Heart left ventricle (tissue), 16 donors: ENCODE measurements at regions of chr6 and their contacts with region 1.

Region 1: DNA sequence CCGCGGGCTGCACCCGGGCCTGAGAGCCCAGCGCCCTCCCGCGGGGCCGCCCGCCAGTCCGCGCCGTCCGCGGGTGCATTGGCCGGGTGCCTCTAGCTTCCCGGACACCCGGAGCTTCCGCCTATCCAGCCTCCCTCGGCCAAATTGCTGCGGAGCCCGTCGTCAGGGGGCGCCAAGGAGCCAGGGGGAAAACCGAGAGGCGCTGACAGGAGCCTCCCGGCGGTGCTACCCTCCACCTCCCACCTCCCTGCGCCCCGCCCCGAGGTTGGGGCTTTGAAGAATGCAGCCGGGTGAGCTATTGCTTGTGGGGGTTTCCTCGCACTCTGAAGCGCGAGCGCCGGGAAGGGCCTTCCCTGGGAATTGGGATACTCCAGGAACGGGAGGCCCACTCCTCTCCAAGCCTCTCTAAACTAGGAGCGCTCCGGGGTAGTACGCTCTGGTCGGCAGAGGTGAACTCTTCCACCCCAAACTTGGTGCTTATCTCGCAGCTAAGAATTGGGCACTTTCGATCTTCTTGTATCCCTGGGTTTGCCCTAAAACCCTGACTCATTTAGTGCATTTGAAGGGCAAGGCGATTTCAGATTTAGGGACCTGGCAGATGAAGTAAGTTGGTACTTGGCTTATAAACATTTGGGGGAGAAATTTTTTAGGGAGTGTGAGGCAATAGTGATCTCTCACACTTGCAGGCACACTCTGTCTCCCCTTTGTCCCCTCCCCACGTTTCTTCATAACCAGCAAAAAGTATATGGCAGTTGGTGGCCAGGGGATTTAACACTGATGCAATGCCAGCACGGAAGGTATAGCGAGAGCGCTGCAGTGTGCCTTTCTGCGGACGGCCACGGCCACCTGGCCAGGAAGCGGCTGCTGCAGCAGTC is 501 bp downstream of the BEND6 start:
- DNase-seq: peak; percentile 73 to 87 (median 79)
- ATAC-seq: peak; percentile 72 to 86 (median 82)
- H3K4me3 ChIP-seq: peak overlapping the region; percentile 30 to 85 (median 58)
- H3K27ac ChIP-seq: peak overlapping the region in 2 of 12 donors; percentile 31 to 57
- H3K4me1 ChIP-seq: peaks cover 0 to 22% (median 7%) of the 10 kb centered on the region in 12 donors
- H3K27me3 ChIP-seq: peaks cover 0 to 36% (median 0%) of the 10 kb centered on the region in 9 donors
- CTCF ChIP-seq: peak; percentile 46 to 80 (median 65)
- POLR2A ChIP-seq: no peak

Region 2: DNA sequence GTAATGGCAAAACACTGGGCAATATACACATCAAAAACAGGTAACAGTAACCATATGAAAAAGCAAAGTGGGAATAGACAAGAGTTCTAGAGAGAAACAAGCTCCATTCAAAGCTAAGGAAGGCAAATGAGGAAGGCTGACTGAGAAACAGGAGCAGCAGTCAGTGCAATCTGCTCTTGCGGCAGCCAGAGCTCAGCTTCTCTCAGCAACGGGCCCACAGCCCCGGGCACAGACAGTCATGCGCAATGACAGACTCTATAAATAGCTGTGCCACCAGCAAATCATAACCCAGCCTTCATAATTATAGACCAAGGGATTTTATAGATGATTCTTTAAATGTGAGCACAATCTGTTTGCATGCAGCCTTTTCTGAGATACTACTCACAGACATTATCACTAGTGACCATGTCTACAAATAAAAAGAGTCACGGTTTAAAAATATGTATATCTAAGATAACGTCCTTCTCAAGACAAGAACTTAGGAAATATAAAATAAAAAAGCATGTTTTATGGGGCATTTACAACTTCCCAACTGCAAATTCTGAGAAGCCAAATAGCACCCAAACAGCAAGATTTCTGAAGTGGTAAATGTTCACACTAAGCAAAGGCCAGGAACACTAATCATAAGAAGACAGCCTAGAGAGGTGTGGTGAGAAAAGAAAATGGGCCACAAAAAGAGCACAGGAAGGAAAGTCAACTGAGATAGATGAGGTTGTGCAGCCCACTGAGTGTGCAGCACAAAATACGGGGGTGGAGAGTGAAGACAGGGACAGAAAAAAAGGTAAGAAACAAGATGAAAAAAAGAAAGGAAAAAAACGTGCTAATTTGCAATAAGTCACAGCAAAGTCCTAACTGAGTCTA is 40.4 kb before region 1 on chr6:
- intact Hi-C with region 1: loop called in 2 of 10 experiments (anchors 5 kb)
- DNase-seq: peak in 4 of 5 donors; percentile 39 to 55 (median 46)
- ATAC-seq: peak; percentile 84 to 97 (median 93)
- H3K4me3 ChIP-seq: no peak overlapping the region
- H3K27ac ChIP-seq: peak overlapping the region in 3 of 12 donors; percentile 18 to 58 (median 27)
- H3K4me1 ChIP-seq: peaks cover 0 to 13% (median 0%) of the 10 kb centered on the region in 12 donors
- H3K27me3 ChIP-seq: peaks cover 0 to 5% (median 0%) of the 10 kb centered on the region in 9 donors
- CTCF ChIP-seq: no peak
- POLR2A ChIP-seq: no peak

Region 3: GRCh38 chr6:56995347-56995902 is 40.0 kb after region 1 on chr6:
- intact Hi-C with region 1: no loop called
- DNase-seq: no peak
- ATAC-seq: no peak
- H3K4me3 ChIP-seq: no peak overlapping the region
- H3K27ac ChIP-seq: no peak overlapping the region
- H3K4me1 ChIP-seq: no peaks in the 10 kb centered on the region
- H3K27me3 ChIP-seq: no peaks in the 10 kb centered on the region
- CTCF ChIP-seq: no peak
- POLR2A ChIP-seq: no peak

Region 4: GRCh38 chr6:57021086-57021720 is 65.8 kb after region 1 on chr6:
- intact Hi-C with region 1: loop called in 1 of 10 experiments (anchors 5 kb)
- DNase-seq: no peak
- ATAC-seq: peak in 1 of 4 donors; percentile 31
- H3K4me3 ChIP-seq: no peak overlapping the region
- H3K27ac ChIP-seq: no peak overlapping the region
- H3K4me1 ChIP-seq: no peaks in the 10 kb centered on the region
- H3K27me3 ChIP-seq: no peaks in the 10 kb centered on the region
- CTCF ChIP-seq: peak; percentile 35 to 70 (median 54)
- POLR2A ChIP-seq: no peak